GM13977 (cell line): ENCODE measurements at regions of chr4 and their contacts with region 1.

Region 1: GRCh38 chr4:107757864-107758476 is 37.9 kb upstream of the PAPSS1 start:
- DNase-seq: no peak
- CTCF ChIP-seq: peak; percentile 38

Region 2: DNA sequence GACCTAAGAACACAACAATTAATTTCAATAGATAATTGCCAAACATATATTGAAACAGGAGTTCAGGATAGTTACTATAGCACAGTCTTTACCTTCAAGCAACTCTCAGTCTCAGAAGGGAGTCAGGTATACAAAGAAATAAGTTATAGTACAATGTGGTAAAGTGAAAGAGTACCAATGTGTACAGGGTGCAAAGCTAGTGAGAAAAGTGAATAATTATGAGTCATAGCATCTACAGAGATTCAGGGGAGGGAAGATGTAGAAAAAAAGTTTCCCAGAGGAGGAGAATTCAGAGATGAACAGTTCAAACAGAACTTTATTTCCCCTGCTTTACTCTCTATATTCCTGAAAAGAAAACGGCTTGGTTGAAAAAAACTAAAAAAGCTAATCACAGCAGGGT is 699.1 kb before region 1 on chr4:
- in situ Hi-C with region 1: no loop called
- DNase-seq: no peak
- CTCF ChIP-seq: no peak

Region 3: GRCh38 chr4:107363125-107363524 is 394.8 kb before region 1 on chr4:
- in situ Hi-C with region 1: no loop called
- DNase-seq: no peak
- CTCF ChIP-seq: no peak

Region 4: DNA sequence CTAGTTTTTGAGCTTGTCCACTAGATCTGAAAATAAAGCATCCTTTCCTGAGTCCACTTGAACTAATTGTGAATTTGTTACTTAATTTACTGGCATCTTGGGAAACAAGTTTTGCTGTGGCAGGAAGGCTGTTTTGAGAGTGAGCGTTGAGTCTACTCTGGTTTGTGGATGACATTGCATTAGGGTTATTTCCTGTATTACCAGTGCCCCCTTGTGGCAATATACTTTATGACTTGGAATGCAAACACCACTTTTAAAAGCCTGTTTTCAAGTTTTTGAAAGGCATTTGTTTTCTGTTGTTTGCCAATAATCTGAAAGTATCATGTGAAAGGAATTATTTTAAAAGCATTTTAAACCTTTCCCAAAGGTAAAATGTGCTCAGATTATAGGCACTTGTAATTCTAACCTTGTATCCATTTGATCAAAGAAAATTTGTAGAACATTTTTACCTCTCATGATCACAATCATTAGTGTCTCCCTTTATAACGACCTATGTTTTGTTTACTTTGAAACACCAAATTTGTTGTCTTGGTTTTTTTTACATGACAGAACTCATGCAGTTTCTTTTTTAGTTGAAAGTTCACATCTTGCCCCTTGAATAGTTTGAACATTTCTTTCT is 155.4 kb after region 1 on chr4:
- in situ Hi-C with region 1: loop called (anchors 25 kb)
- DNase-seq: no peak
- CTCF ChIP-seq: peak; percentile 69